Dendritic cell treated with granulocyte-macrophage colony-stimulating factor and Interleukin-4, amounts not matched to agents 40 ng/mL and 50 ng/mL, for 4 days (primary cell): ENCODE measurements at regions of chr6 and their contacts with region 1.

Region 1: DNA sequence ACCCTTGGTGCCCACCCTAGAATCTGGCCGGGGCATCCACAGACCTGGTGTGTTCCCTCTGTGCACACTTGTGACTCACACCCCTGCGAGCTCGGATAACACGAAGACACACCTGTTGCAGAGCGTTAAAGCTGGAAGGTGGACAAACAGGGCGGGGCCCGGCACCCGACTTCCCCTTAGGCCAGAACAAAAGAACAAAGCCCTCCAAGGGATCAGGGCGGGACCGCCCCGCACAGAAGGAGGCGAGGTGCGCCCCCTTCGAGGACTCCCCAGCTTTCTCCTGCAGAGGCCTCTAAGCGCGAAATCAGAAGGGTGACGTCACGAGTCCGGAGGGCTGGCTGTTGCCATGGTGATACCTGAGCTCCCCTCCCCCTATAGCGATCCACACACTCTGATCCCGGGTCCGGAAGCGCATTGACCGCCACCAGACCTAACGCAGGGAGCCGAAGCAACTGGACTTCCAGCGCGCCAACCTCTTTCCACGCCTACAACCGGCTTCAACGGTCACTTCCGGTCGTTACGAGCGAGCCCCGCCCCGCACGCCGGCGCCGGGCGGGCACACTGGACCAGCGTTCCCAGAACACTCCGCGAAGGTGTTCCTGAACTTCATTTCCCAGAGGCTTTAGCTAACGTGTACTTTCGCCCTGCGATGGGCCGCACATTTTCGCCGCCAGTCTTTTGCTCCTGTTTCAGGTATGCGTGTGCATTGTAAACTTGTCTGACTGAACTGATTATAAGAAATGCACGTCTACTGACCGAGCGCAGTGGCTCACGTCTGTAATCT is at the start of gene ZNF184:
- H3K4me3 Mint-ChIP-seq: peak within 1 kb of the TSS; percentile 93
- H3K27ac Mint-ChIP-seq: peak within 1 kb of the TSS; percentile 94
- H3K4me1 Mint-ChIP-seq: peaks cover 21% of the 10 kb centered on the region
- H3K27me3 Mint-ChIP-seq: no peaks in the 10 kb centered on the region

Region 2: DNA sequence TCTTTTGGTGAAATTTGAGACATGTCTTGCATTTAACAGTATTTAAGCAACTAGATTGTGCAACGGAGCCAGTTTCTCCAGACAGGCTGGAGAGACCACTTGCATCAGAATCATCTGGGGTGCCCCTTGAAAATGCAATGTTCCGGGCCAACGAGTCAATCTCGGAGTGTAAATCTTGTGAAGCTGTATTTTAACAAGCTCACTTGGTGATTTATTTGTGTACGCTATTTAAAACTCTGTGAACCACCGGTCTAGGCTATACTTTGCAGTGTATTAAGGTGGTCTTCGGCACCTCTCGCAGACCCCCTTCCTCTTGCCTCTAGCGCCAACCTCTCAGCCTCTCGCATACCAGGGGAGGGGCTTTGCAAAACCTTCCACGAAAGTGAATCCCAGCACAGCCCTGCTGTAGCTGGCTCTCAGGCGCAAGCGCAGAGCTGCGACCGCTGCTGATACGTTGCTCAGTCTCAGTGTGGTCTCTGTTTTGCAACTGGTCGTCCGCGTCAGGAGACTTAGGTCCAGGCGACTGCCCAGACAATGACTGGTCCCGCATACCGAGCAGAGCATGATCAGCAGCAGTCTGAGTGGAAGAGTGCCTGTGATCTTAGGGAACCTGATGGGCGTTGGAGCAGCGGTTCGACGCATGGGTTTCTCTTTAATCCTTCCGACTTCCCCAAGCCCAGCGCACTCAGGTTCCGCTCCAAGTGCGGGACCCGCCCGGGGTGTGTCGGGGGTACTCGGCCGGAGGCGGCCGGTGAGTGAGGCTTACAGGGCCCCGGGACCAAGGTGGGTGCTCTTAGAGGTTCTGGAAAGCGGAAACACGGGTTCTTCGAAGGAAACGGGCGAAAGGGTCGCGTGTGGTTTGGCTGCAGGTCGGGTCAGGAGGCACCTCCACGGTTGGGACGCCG is 84.3 kb before region 1 on chr6 and contains the start of gene ZNF391:
- intact Hi-C with region 1: loop called (anchors 2 kb)
- H3K4me3 Mint-ChIP-seq: peak within 1 kb of the TSS; percentile 98
- H3K27ac Mint-ChIP-seq: peak within 1 kb of the TSS; percentile 86
- H3K4me1 Mint-ChIP-seq: peaks cover 13% of the 10 kb centered on the region
- H3K27me3 Mint-ChIP-seq: peaks cover 15% of the 10 kb centered on the region

Region 3: GRCh38 chr6:27503436-27504030 is 30.7 kb after region 1 on chr6:
- intact Hi-C with region 1: loop called (anchors 2 kb)
- H3K4me3 Mint-ChIP-seq: peak overlapping the region; percentile 68
- H3K27ac Mint-ChIP-seq: no peak overlapping the region
- H3K4me1 Mint-ChIP-seq: peaks cover 19% of the 10 kb centered on the region
- H3K27me3 Mint-ChIP-seq: peaks cover 66% of the 10 kb centered on the region